Common myeloid progenitor, CD34-positive (primary cell): ENCODE measurements at regions of chr10 and their contacts with region 1.

Region 1: DNA sequence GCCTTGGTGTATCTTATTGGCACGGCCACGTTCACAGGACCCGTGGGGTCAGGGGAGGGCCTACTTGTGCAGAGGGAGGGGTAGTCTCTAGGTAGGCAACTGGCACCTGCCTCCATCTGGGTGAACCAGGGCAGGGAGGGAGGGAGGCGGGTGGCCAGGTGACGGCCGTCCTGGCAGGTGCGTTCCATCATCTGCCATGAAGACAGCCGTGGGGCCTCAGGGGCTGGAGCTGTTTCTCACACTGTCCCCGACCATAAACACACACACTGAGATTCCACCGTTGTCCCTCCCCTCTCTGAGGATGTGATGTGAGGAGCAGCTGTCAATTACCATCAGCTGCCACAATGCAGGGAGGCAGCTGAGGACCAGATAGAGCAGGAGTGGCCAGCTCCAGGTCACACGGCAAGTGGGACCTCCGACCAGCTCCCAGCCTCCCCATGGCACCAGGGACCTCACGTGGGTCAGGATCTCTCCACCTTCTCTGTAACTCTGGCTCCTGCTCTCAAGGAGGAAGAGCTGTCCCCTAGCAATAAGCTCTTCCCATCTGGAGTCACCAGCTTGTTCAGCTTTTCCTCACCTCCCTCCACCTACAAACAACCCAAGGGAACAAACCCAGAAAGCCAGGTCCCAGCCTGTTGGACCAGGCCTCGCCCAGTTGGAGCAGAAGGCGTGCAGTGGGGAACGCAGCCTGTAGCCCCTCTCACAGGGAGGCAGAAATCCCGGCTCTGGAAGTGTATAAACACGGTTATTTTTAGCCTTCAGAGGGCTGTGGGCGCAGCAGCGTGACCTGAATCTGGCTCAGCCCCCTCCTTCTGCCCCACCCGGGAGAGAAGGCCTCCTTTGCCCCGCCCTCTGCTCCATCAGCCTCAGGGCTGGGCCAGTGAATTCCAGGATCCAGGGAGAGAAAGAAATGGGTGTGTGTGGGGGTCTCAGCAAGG is 33.1 kb downstream of the ZMIZ1 start:
- DNase-seq: peak in 2 of 3 donors; percentile 48 to 61
- H3K4me3 ChIP-seq: peak overlapping the region in 3 of 7 experiments; percentile 38 to 47 (median 38)
- H3K27ac ChIP-seq: peak overlapping the region; percentile 28 to 74
- H3K4me1 ChIP-seq: peaks cover 14 to 100% (median 99%) of the 10 kb centered on the region in 4 experiments
- H3K27me3 ChIP-seq: no peaks in the 10 kb centered on the region

Region 2: GRCh38 chr10:79073784-79074432 is 27.9 kb before region 1 on chr10:
- CTCF ChIA-PET with region 1: interaction called, 19 read pairs
- POLR2A ChIA-PET with region 1: interaction called, 5 read pairs
- DNase-seq: peak in 2 of 3 donors; percentile 69 to 72
- H3K4me3 ChIP-seq: peak overlapping the region in 5 of 7 experiments; percentile 35 to 99 (median 53)
- H3K27ac ChIP-seq: peak overlapping the region; percentile 85 to 90
- H3K4me1 ChIP-seq: peaks cover 4 to 81% (median 77%) of the 10 kb centered on the region in 4 experiments
- H3K27me3 ChIP-seq: no peaks in the 10 kb centered on the region

Region 3: DNA sequence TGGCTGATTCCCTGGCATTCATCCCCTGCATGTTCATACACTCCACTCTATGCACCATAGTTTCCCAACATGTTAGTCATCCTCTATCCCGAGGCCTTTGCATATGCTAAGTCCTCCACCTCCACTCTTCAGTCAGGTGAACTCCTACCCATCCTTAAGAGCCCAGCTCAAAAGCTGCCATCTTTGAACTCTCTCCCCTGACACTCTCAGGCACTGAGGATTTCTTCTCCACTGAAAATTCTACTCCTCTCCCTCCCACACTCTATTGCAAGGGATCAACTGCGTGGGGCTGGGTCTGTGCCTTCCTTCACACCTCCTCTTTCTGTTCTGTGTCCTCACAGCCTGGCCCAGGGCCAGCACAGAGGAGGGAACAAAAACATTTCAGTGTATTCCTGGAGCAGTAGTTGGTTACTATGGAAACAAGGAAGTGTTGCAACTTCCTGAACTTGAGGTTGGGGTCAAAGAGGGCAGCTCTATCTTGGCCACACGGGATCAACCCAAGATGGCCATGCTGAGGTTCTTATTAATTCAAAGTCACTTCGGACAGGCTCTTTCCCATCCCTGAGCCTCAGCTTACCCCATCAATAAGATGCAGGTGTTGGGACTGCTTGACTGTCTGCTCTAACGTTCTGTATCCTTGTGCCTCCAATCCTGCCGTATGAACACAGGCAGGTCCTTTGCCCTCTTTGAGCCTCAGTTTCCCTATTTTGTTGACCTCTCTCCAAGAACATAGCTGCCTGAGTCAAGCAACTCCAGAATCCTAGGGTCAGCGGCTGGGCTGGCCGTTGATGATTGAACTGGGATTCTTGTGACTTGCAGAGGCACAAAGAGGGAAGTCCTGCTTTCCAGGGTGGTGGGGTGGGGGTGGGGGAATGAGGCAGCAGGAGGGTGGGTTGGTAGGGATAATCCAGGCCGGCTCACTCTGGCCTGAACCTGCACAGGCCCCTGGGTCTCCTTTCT is 17.5 kb before region 1 on chr10:
- CTCF ChIA-PET with region 1: interaction called, 16 read pairs
- POLR2A ChIA-PET with region 1: no interaction called
- DNase-seq: peak; percentile 93 to 96 (median 94)
- H3K4me3 ChIP-seq: peak overlapping the region in 3 of 7 experiments; percentile 16 to 46 (median 30)
- H3K27ac ChIP-seq: peak overlapping the region; percentile 89 to 92
- H3K4me1 ChIP-seq: peaks cover 11 to 98% (median 97%) of the 10 kb centered on the region in 4 experiments
- H3K27me3 ChIP-seq: no peaks in the 10 kb centered on the region

Region 4: GRCh38 chr10:79116801-79117723 is 15.2 kb after region 1 on chr10:
- CTCF ChIA-PET with region 1: interaction called, 12 read pairs
- POLR2A ChIA-PET with region 1: no interaction called
- DNase-seq: no peak
- H3K4me3 ChIP-seq: no peak overlapping the region
- H3K27ac ChIP-seq: peak overlapping the region; percentile 1 to 49
- H3K4me1 ChIP-seq: peaks cover 0 to 62% (median 52%) of the 10 kb centered on the region in 4 experiments
- H3K27me3 ChIP-seq: no peaks in the 10 kb centered on the region

Region 5: DNA sequence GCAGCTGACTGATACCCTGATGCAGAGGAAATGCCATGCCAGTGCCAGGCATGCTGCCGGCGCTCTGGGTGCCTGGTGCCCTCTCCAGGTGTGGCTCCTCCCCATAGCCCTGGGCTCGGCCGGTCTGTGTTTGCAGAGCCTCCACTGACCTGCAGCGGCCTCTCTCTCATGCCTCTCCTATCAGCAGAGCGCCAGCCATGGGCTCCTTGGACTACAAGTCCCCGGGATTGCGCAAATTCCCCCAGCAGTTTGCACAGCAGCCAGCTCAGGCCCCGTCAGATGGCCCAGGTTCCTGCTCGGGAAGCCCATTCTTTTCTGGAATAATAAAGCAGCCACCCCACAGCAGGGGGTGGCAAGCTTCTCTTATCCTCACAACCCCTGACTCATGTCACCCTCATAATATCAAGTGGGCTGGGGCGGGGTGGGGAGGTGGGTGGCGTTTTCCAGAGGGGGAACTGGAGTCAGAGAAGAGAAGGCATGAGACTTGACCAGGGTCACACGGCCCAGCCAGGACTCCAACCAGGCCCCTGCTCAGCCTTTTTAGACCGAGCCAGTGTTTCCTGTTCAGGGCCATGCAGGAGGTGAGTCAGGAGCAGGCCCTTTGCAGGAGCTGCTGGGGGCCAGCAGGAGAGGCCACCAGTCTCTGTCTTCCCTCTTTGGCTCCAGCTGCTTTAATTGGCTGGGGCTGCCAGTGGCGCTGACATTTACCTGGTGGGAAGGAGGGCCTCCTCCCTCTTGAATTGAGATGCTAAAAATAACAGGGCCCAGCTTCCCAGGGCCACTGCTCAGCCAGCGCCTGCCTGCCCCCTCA is 25.5 kb after region 1 on chr10:
- CTCF ChIA-PET with region 1: interaction called, 27 read pairs
- POLR2A ChIA-PET with region 1: interaction called, 3 read pairs
- DNase-seq: peak in 1 of 3 donors; percentile 40
- H3K4me3 ChIP-seq: no peak overlapping the region
- H3K27ac ChIP-seq: peak overlapping the region in 1 of 2 experiments; percentile 46
- H3K4me1 ChIP-seq: peaks cover 13 to 95% (median 78%) of the 10 kb centered on the region in 4 experiments
- H3K27me3 ChIP-seq: no peaks in the 10 kb centered on the region

Region 6: DNA sequence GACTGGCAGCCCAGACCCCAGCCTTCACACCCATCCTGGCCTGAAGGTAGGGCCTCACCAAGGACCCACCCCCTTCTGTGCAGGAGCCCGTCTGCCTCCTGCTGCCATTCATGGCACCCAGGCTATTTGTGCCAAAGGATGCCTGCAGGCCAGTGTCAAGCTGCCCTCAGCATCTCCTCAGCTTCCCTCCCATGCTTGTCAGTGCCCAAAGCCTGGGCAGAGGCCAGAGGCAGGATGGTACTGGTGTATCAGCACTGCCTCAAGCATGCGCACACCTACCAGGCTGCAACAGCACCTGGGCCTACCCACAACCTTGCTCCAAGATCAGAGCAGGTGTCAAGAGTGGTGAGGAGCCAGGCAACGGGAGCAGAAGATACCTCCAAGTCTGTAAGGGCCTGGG is 536.5 kb after region 1 on chr10:
- CTCF ChIA-PET with region 1: no interaction called
- POLR2A ChIA-PET with region 1: no interaction called
- DNase-seq: no peak
- H3K4me3 ChIP-seq: no peak overlapping the region
- H3K27ac ChIP-seq: no peak overlapping the region
- H3K4me1 ChIP-seq: no peaks in the 10 kb centered on the region
- H3K27me3 ChIP-seq: peaks cover 0 to 2% (median 0%) of the 10 kb centered on the region in 5 experiments